CD8-positive, alpha-beta T cell (primary cell): ENCODE measurements at regions of chr11 and their contacts with region 1.

Region 1: DNA sequence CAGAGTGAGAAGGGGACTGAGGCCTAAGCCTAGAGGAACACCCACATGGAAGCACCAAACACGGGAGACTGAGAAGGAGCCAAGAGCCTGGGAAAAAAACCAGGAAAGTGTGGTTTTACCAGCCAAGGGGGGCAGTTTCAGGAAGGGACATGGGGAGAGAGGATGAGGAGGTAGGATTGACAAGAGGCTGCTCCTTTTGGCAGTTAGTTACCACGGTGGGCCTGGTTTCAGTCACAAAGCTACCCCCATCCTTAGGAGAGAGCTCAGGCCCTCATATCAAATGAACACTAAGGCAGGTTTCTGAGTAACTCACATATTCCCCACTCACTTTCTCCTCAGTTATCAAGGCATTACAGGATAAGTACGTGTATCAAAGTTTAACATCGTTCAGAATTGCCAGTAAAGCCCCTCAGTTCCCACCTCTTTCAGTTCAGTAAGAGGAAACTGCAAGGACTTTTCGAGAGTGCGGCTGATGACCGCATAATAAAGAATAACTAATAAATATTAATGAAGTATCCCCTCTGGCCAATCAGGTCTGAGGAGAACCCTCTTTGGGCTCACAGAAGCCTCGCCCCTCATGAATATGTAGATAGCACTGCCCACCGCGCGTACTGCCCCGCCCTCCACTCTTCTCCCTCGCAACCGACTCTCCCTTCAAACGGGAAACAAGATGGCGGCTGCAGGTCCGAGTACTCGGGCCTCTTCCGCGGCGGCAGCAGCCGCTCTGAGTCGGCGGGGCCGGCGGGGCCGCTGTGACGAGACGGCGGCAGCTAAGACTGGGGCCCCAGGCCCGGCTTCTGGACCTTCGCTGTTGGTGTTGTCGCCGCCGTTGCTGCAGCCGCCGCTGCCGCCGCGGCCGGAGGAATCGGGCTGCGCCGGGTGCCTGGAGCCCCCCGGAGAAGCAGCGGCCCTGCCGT is at the start of gene RNF169:
- DNase-seq: peak; percentile 81 to 96 (median 89)
- ATAC-seq: peak; percentile 98
- H3K4me3 ChIP-seq: peak within 1 kb of the TSS; percentile 56 to 63
- H3K4me3 Mint-ChIP-seq: peak within 1 kb of the TSS; percentile 90
- H3K27ac ChIP-seq: peak within 1 kb of the TSS; percentile 62 to 78
- H3K27ac Mint-ChIP-seq: peak within 1 kb of the TSS; percentile 90
- H3K4me1 ChIP-seq: peaks cover 23% of the 10 kb centered on the region
- H3K4me1 Mint-ChIP-seq: peaks cover 43% of the 10 kb centered on the region
- H3K27me3 ChIP-seq: no peaks in the 10 kb centered on the region
- H3K27me3 Mint-ChIP-seq: no peaks in the 10 kb centered on the region
- CTCF ChIP-seq: no peak
- total RNA-seq, gene RNF169: 14.1 to 14.8 TPM

Region 2: GRCh38 chr11:74398244-74399159 is 350.0 kb before region 1 on chr11 and contains the start of gene PGM2L1:
- CTCF ChIA-PET with region 1: no interaction called
- POLR2A ChIA-PET with region 1: no interaction called
- intact Hi-C with region 1: loop called (anchors 2 to 5 kb)
- DNase-seq: peak; percentile 85 to 97 (median 95)
- ATAC-seq: peak; percentile 86
- H3K4me3 ChIP-seq: peak within 1 kb of the TSS; percentile 51 to 92
- H3K4me3 Mint-ChIP-seq: peak within 1 kb of the TSS; percentile 99
- H3K27ac ChIP-seq: peak within 1 kb of the TSS; percentile 44 to 58
- H3K27ac Mint-ChIP-seq: peak within 1 kb of the TSS; percentile 96
- H3K4me1 ChIP-seq: peaks cover 10% of the 10 kb centered on the region
- H3K4me1 Mint-ChIP-seq: peaks cover 26% of the 10 kb centered on the region
- H3K27me3 ChIP-seq: no peaks in the 10 kb centered on the region
- H3K27me3 Mint-ChIP-seq: no peaks in the 10 kb centered on the region
- CTCF ChIP-seq: no peak
- total RNA-seq, gene PGM2L1: 5.2 to 5.8 TPM

Region 3: DNA sequence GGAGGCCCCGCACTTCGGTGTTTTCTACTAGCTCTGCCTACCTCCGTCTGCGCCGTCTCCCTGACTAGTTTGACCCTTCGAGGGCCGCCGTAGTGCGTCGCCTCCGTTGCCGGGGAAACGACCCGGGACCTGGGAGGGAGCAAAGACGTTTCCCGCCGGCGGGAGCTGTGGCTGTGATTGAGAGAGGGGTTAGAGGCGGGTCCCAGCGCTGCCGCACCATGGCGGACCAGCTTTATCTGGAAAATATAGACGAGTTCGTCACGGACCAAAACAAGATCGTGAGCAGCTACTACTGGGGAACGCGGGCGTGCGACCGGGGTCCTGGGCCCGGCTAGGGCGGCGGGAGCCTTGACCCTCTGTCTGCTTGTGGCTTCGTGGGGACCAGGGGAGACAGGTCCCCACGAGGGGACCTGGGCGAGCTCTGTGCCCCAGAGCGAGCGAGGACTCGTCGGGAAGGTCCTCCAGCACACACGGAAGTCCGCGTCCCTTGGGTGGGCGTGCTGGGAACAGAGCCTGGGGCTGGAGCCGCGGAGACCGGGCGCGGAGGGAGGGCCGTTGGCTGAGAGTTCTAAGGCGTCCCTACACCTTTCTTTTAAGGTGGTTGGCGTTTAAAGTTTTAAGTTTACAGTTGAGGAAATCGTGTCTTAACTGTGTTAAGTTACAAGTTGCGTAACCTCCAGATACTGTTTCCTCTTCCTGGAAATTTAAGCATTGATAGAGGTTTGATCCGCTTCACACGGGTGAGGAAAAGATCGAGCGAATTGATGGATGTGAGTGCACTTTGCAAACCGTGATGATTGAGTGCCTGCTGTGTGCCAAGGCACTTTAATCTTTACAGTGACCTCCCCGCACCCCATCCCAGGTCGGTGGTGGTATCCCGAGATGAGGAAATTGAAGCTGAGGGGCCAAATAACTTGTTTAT is 155.8 kb before region 1 on chr11 and contains the start of gene POLD3:
- CTCF ChIA-PET with region 1: no interaction called
- POLR2A ChIA-PET with region 1: no interaction called
- intact Hi-C with region 1: loop called (anchors 5 kb)
- DNase-seq: peak; percentile 88 to 96 (median 92)
- ATAC-seq: peak; percentile 94
- H3K4me3 ChIP-seq: peak within 1 kb of the TSS; percentile 88 to 100
- H3K4me3 Mint-ChIP-seq: peak within 1 kb of the TSS; percentile 99
- H3K27ac ChIP-seq: peak within 1 kb of the TSS; percentile 82 to 91
- H3K27ac Mint-ChIP-seq: peak within 1 kb of the TSS; percentile 97
- H3K4me1 ChIP-seq: peaks cover 11% of the 10 kb centered on the region
- H3K4me1 Mint-ChIP-seq: peaks cover 19% of the 10 kb centered on the region
- H3K27me3 ChIP-seq: no peaks in the 10 kb centered on the region
- H3K27me3 Mint-ChIP-seq: no peaks in the 10 kb centered on the region
- CTCF ChIP-seq: no peak
- total RNA-seq, gene POLD3: 4.0 TPM

Region 4: DNA sequence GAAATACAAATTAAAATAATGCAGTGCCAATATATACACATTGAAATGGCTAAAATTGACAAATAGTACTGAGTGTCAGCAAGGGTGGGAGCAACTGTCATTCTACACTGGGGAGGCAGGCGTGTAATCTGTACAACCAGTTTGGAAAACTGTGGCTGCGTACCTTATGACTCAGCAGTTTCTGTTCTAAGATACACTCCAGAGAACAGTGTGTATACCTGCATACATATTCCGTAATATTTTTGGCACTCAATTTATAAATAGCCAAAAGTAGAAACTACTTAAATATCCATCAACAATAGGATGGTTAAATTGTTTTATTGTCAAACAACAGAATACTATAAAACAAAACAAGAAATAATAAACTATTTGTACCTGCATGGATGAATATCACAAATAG is 57.8 kb after region 1 on chr11:
- CTCF ChIA-PET with region 1: no interaction called
- POLR2A ChIA-PET with region 1: no interaction called
- intact Hi-C with region 1: no loop called
- DNase-seq: no peak
- ATAC-seq: no peak
- H3K4me3 ChIP-seq: no peak overlapping the region
- H3K4me3 Mint-ChIP-seq: no peak overlapping the region
- H3K27ac ChIP-seq: no peak overlapping the region
- H3K27ac Mint-ChIP-seq: no peak overlapping the region
- H3K4me1 ChIP-seq: peaks cover 7% of the 10 kb centered on the region
- H3K4me1 Mint-ChIP-seq: peaks cover 35% of the 10 kb centered on the region
- H3K27me3 ChIP-seq: no peaks in the 10 kb centered on the region
- H3K27me3 Mint-ChIP-seq: no peaks in the 10 kb centered on the region
- CTCF ChIP-seq: no peak

Region 5: GRCh38 chr11:74937696-74938475 is 189.4 kb after region 1 on chr11:
- CTCF ChIA-PET with region 1: no interaction called
- POLR2A ChIA-PET with region 1: no interaction called
- intact Hi-C with region 1: no loop called
- DNase-seq: no peak
- ATAC-seq: no peak
- H3K4me3 ChIP-seq: no peak overlapping the region
- H3K4me3 Mint-ChIP-seq: no peak overlapping the region
- H3K27ac ChIP-seq: no peak overlapping the region
- H3K27ac Mint-ChIP-seq: no peak overlapping the region
- H3K4me1 ChIP-seq: no peaks in the 10 kb centered on the region
- H3K4me1 Mint-ChIP-seq: peaks cover 10% of the 10 kb centered on the region
- H3K27me3 ChIP-seq: no peaks in the 10 kb centered on the region
- H3K27me3 Mint-ChIP-seq: no peaks in the 10 kb centered on the region
- CTCF ChIP-seq: no peak

Region 6: GRCh38 chr11:74948898-74949747 is 200.7 kb after region 1 on chr11 and contains the starts of genes SPCS2 and XRRA1:
- CTCF ChIA-PET with region 1: no interaction called
- POLR2A ChIA-PET with region 1: no interaction called
- intact Hi-C with region 1: loop called (anchors 5 kb)
- DNase-seq: peak; percentile 95 to 99 (median 97)
- ATAC-seq: peak; percentile 95
- H3K4me3 ChIP-seq: peak within 1 kb of the TSS; percentile 86 to 90
- H3K4me3 Mint-ChIP-seq: peak within 1 kb of the TSS; percentile 92
- H3K27ac ChIP-seq: peak within 1 kb of the TSS; percentile 80 to 88
- H3K27ac Mint-ChIP-seq: peak within 1 kb of the TSS; percentile 95
- H3K4me1 ChIP-seq: peaks cover 31% of the 10 kb centered on the region
- H3K4me1 Mint-ChIP-seq: peaks cover 63% of the 10 kb centered on the region
- H3K27me3 ChIP-seq: no peaks in the 10 kb centered on the region
- H3K27me3 Mint-ChIP-seq: no peaks in the 10 kb centered on the region
- CTCF ChIP-seq: no peak
- total RNA-seq, gene SPCS2: 38.1 to 42.3 TPM
- total RNA-seq, gene XRRA1: 19.2 to 20.9 TPM

Region 7: GRCh38 chr11:75241036-75241905 is 492.8 kb after region 1 on chr11:
- CTCF ChIA-PET with region 1: no interaction called
- POLR2A ChIA-PET with region 1: no interaction called
- intact Hi-C with region 1: loop called in 1 of 2 experiments (anchors 5 kb)
- DNase-seq: peak; percentile 77 to 91 (median 83)
- ATAC-seq: peak; percentile 93
- H3K4me3 ChIP-seq: peak overlapping the region; percentile 31 to 61
- H3K4me3 Mint-ChIP-seq: peak overlapping the region; percentile 79
- H3K27ac ChIP-seq: no peak overlapping the region
- H3K27ac Mint-ChIP-seq: no peak overlapping the region
- H3K4me1 ChIP-seq: peaks cover 9% of the 10 kb centered on the region
- H3K4me1 Mint-ChIP-seq: peaks cover 10% of the 10 kb centered on the region
- H3K27me3 ChIP-seq: peaks cover 17 to 20% of the 10 kb centered on the region in 2 experiments
- H3K27me3 Mint-ChIP-seq: peaks cover 49% of the 10 kb centered on the region
- CTCF ChIP-seq: peak; percentile 77

Region 8: DNA sequence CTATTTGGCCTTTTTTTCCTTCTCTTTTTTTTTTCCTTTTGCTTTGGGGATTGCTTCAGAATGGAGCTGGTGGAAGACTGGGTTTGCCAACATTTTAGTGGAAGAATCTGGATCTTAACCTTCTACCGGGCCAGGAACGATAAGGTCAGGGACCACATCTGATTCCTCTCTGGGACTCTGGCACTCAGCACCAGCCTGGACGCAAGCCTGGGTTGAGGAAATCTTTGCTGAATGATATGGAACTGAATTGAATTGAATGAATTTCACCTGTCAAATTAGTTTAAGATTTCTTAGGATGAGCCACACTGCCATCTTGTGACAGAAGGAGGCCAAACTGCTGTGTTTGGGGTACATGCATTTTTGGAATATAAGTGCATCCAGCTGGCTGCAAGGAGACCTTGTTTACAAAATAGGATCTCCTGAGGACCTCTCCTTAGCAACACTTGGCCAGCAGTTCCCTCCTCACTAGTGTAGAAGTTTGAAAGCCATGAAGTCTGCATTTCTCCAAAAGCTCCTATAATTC is 522.5 kb after region 1 on chr11:
- CTCF ChIA-PET with region 1: no interaction called
- POLR2A ChIA-PET with region 1: no interaction called
- intact Hi-C with region 1: no loop called
- DNase-seq: peak in 3 of 9 experiments; percentile 24 to 61 (median 44)
- ATAC-seq: no peak
- H3K4me3 ChIP-seq: no peak overlapping the region
- H3K4me3 Mint-ChIP-seq: no peak overlapping the region
- H3K27ac ChIP-seq: no peak overlapping the region
- H3K27ac Mint-ChIP-seq: peak overlapping the region; percentile 98
- H3K4me1 ChIP-seq: peaks cover 52% of the 10 kb centered on the region
- H3K4me1 Mint-ChIP-seq: peaks cover 44% of the 10 kb centered on the region
- H3K27me3 ChIP-seq: no peaks in the 10 kb centered on the region
- H3K27me3 Mint-ChIP-seq: no peaks in the 10 kb centered on the region
- CTCF ChIP-seq: peak; percentile 48

Region 9: GRCh38 chr11:76444384-76445123 is 1696.1 kb after region 1 on chr11 and contains the start of gene EMSY:
- CTCF ChIA-PET with region 1: no interaction called
- POLR2A ChIA-PET with region 1: no interaction called
- intact Hi-C with region 1: loop called in 1 of 2 experiments (anchors 10 kb)
- DNase-seq: peak; percentile 77 to 97 (median 90)
- ATAC-seq: peak; percentile 91
- H3K4me3 ChIP-seq: peak within 1 kb of the TSS; percentile 58 to 100
- H3K4me3 Mint-ChIP-seq: peak within 1 kb of the TSS; percentile 94
- H3K27ac ChIP-seq: peak within 1 kb of the TSS; percentile 70 to 97
- H3K27ac Mint-ChIP-seq: peak within 1 kb of the TSS; percentile 96
- H3K4me1 ChIP-seq: peaks cover 20% of the 10 kb centered on the region
- H3K4me1 Mint-ChIP-seq: peaks cover 38% of the 10 kb centered on the region
- H3K27me3 ChIP-seq: no peaks in the 10 kb centered on the region
- H3K27me3 Mint-ChIP-seq: no peaks in the 10 kb centered on the region
- CTCF ChIP-seq: no peak
- total RNA-seq, gene EMSY: 19.8 to 20.7 TPM